ENCODE measurements at regions of chr21 and their contacts with region 1.

Region 1: DNA sequence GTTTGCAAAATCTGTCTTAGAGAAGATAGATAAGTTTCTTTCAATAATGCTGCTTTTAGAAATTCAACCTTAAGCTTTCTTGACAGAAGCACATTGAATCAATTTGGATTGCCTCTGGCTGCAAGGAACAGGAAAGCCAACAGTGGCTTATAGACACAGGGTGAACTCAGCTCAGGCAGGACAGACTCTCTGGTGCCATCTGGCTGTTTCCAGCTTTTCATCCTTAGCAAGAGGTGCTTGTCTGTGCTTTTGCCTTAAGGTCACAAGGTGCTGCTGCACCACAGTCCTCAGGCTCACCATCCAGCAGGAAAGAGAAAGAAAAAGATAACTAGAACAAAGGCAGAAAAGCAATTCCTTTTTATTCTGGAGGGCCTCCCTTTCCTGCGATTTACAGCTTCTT is 93.7 kb upstream of the ETS2 start:
- DNase-seq: peak in 1 of 2 donors; percentile 75
- H3K4me3 ChIP-seq: no peak overlapping the region
- H3K27ac ChIP-seq: peak overlapping the region in 1 of 2 donors; percentile 12
- H3K4me1 ChIP-seq: no peaks in the 10 kb centered on the region
- H3K27me3 ChIP-seq: no peaks in the 10 kb centered on the region
- CTCF ChIP-seq: peak; percentile 49 to 68 (median 51)

Region 2: DNA sequence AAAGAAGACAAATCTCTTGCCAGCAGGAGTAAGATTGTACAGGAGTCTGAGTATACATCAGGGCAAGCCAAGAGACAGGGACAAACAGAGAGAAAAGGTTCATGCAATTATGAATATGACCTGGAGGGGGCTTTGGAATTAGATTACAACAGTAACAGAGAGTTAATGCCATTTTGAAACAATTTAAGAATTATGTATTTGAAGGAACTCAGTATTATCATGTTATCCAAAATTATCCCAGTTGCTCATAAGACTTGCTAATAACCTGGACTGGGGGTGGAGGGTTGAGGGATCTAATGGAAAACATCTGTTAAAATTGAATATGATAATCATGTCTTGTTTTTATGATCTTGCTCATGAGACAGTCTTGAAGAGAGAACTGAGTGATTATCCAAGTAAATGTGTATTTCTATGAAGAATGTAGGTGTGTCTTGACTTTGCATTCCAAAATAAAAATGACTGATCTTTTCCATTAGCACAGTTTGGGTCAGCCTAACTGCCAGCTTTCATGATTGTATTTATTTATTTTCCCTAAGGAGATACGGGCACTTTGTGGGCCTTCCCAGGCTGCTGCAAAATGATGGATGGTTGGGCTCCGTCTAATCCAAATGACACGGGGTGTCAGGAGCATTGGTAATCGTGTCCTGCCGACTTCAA is 331.5 kb before region 1 on chr21:
- intact Hi-C with region 1: loop called (anchors 10 kb)
- DNase-seq: peak in 1 of 2 donors; percentile 78
- H3K4me3 ChIP-seq: peak overlapping the region in 1 of 2 donors; percentile 17
- H3K27ac ChIP-seq: peak overlapping the region; percentile 75 to 89
- H3K4me1 ChIP-seq: peaks cover 17 to 41% of the 10 kb centered on the region in 2 donors
- H3K27me3 ChIP-seq: no peaks in the 10 kb centered on the region
- CTCF ChIP-seq: peak; percentile 7 to 33 (median 28)

Region 3: DNA sequence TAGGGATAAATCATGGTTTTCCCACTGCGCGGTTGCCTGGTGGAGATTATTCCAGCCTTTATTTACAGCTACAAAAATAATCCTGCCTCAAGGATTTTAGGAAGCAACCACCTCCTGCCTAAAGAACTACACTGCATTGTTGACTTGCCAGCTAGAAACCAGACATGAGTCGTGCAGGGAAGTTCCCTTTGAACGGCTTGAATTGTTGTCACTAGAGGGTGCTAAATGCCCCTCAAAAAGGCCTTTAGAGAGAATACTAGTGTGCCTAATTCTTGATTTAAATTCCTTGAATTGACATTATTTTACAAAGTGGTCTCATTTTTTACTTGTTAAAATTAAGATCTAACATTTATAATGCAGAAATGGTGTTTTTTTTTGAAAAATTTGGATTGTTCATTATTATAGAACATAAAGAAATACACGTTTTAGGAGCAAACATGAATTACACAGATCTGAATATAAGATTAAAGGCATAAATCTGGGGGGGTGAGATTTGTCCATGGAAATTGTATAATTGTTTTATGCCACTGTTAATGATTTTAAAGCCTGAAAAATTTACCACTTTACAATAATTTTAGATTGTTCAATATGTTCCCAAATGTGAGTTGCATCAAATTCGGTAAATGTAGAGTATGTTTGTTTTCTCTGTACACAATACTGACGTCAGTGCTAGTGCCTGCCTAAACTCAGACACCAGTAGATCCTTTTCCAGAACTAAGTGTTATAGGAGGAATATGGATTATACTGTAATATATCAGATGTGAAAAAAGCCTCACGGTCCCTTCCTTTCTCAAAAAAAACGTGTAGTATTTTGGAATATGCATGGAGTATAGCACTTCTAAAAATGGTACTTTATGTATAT is 206.2 kb before region 1 on chr21:
- intact Hi-C with region 1: loop called (anchors 1 kb)
- DNase-seq: no peak
- H3K4me3 ChIP-seq: peak overlapping the region; percentile 31 to 62
- H3K27ac ChIP-seq: peak overlapping the region; percentile 82 to 86
- H3K4me1 ChIP-seq: peaks cover 0 to 24% of the 10 kb centered on the region in 2 donors
- H3K27me3 ChIP-seq: no peaks in the 10 kb centered on the region
- CTCF ChIP-seq: peak; percentile 54 to 75 (median 73)

Region 4: GRCh38 chr21:38661197-38661871 is 50.7 kb before region 1 on chr21:
- intact Hi-C with region 1: loop called (anchors 5 kb)
- DNase-seq: peak in 1 of 2 donors; percentile 81
- H3K4me3 ChIP-seq: peak overlapping the region; percentile 64 to 82
- H3K27ac ChIP-seq: peak overlapping the region; percentile 92 to 96
- H3K4me1 ChIP-seq: peaks cover 0 to 5% of the 10 kb centered on the region in 2 donors
- H3K27me3 ChIP-seq: no peaks in the 10 kb centered on the region
- CTCF ChIP-seq: no peak

Region 5: GRCh38 chr21:38669176-38669575 is 42.9 kb before region 1 on chr21:
- intact Hi-C with region 1: loop called (anchors 2 kb)
- DNase-seq: no peak
- H3K4me3 ChIP-seq: no peak overlapping the region
- H3K27ac ChIP-seq: no peak overlapping the region
- H3K4me1 ChIP-seq: peaks cover 0 to 12% of the 10 kb centered on the region in 2 donors
- H3K27me3 ChIP-seq: no peaks in the 10 kb centered on the region
- CTCF ChIP-seq: peak; percentile 27 to 54 (median 41)

Region 6: DNA sequence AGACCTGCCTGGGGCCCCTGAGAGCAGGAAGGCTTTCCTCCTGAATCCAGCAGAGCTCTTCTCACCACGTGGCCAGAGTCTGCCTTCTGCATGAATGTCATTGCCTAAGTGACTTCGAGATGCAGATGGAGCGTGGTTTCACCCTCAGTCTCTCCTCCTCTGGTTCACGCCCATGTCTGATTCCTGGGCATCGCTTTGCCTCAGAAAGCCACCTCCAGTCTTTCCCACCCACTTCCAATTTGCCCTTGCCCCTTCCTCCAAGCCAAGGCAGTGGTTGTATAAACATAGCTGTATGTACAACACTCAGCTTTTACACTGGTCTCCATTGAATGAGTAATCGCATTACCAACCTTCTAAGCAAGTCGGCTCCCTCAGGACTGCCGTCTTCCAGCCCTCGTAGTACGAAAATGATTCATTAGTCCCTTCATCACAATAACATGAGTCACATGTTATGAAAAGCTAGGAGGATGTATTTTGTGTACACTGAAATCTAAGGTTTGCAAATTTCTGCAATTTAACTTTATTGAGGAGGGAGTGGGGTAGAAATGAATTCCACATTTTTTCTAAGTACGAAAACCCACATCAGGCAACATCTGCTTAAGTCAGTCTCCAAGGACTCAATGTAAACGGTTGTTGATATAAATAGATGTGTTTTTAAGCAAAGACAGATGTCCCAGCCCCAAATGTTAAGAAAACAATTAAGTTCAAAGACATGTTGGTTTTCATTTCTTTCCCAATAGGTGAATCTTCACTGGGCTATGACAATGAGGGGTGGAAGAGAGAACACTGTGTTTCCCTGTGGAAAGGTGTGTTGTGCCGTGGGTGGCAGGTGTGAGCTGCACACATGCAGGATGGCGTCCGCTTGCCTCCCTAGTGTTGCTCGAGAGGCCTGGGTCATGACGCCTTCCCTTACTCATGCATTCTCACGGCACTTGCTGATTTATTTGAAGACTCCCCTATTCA is 61.3 kb after region 1 on chr21:
- intact Hi-C with region 1: no loop called
- DNase-seq: peak; percentile 43 to 92
- H3K4me3 ChIP-seq: no peak overlapping the region
- H3K27ac ChIP-seq: peak overlapping the region; percentile 37 to 75
- H3K4me1 ChIP-seq: peaks cover 4 to 18% of the 10 kb centered on the region in 2 donors
- H3K27me3 ChIP-seq: no peaks in the 10 kb centered on the region
- CTCF ChIP-seq: no peak

Region 7: GRCh38 chr21:39079617-39080016 is 367.5 kb after region 1 on chr21:
- intact Hi-C with region 1: no loop called
- DNase-seq: peak; percentile 66 to 87
- H3K4me3 ChIP-seq: no peak overlapping the region
- H3K27ac ChIP-seq: peak overlapping the region in 1 of 2 donors; percentile 2
- H3K4me1 ChIP-seq: peaks cover 8 to 10% of the 10 kb centered on the region in 2 donors
- H3K27me3 ChIP-seq: no peaks in the 10 kb centered on the region
- CTCF ChIP-seq: no peak